ENCODE measurements at regions of chr9 and their contacts with region 1.

Region 1: DNA sequence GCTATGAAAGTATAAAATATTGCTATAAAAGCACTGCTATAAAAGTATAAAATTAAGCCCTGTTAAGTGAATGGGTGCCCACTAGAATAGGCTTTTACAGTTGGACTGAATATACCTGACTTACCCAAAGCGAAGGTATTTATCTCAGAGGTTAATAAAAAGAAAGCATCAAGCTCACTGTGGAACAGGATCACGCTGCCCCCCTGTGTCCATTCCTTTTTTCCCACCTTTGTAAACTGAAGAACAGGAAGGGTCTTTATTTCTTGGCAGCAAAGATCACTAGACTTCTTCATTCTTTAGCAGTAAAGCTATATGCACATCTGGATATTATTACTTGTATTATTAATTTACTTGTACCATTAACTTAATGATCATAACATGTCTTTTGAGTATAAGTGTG is 22.1 kb upstream of the PLPP6 start:
- DNase-seq: peak; percentile 67
- ATAC-seq: peak; percentile 64
- H3K4me3 Mint-ChIP-seq: no peak overlapping the region
- H3K27ac Mint-ChIP-seq: no peak overlapping the region
- H3K4me1 Mint-ChIP-seq: peaks cover 2% of the 10 kb centered on the region
- H3K27me3 Mint-ChIP-seq: peaks cover 4% of the 10 kb centered on the region

Region 2: GRCh38 chr9:4315582-4316215 is 324.3 kb before region 1 on chr9:
- CTCF ChIA-PET with region 1: interaction called, 13 read pairs
- DNase-seq: peak; percentile 80
- ATAC-seq: peak; percentile 84
- H3K4me3 Mint-ChIP-seq: no peak overlapping the region
- H3K27ac Mint-ChIP-seq: no peak overlapping the region
- H3K4me1 Mint-ChIP-seq: no peaks in the 10 kb centered on the region
- H3K27me3 Mint-ChIP-seq: peaks cover 24% of the 10 kb centered on the region

Region 3: DNA sequence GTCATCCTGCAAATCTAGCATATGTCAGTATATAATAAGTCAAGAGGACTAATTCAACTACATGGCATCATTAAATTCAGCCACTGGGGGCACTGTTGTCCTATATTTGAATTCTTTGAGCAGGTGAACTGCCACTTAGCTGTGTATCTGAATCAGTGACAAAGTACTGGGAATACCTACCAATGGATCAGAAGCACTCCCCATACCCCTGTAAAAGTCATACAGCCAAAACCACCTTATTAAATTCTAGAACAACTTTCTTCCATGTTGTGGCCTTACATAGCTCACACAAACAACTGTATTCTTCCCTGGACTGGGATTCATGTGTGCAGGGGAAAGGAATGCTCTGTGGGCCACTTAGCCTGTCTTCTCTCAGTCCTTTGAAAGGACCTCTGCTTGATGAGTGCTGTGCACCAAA is 35.3 kb before region 1 on chr9:
- CTCF ChIA-PET with region 1: interaction called, 26 read pairs
- DNase-seq: peak; percentile 84
- ATAC-seq: peak; percentile 91
- H3K4me3 Mint-ChIP-seq: no peak overlapping the region
- H3K27ac Mint-ChIP-seq: peak overlapping the region; percentile 5
- H3K4me1 Mint-ChIP-seq: peaks cover 20% of the 10 kb centered on the region
- H3K27me3 Mint-ChIP-seq: no peaks in the 10 kb centered on the region

Measured in activated CD8-positive, alpha-beta memory T cell treated with anti-CD3 and anti-CD28 coated beads, Interleukin-2, amount 10 ng/mL, durations not matched to agents 7 days and 5 days (primary cell).